Activated CD8-positive, alpha-beta memory T cell treated with anti-CD3 and anti-CD28 coated beads, Interleukin-2, amount 10 ng/mL, durations not matched to agents 7 days and 5 days (primary cell): ENCODE measurements at regions of chr15 and their contacts with region 1.

Region 1: GRCh38 chr15:89358755-89359439 is 24.3 kb upstream of the POLG start:
- DNase-seq: peak; percentile 86
- ATAC-seq: peak; percentile 93
- H3K4me3 Mint-ChIP-seq: peak overlapping the region; percentile 73
- H3K27ac Mint-ChIP-seq: peak overlapping the region; percentile 54
- H3K4me1 Mint-ChIP-seq: peaks cover 7% of the 10 kb centered on the region
- H3K27me3 Mint-ChIP-seq: peaks cover 83% of the 10 kb centered on the region

Region 2: GRCh38 chr15:89334510-89335288 is 24.2 kb before region 1 on chr15 and contains the start of gene POLG:
- CTCF ChIA-PET with region 1: interaction called, 120 read pairs
- DNase-seq: peak; percentile 99
- ATAC-seq: peak; percentile 93
- H3K4me3 Mint-ChIP-seq: peak within 1 kb of the TSS; percentile 83
- H3K27ac Mint-ChIP-seq: peak within 1 kb of the TSS; percentile 87
- H3K4me1 Mint-ChIP-seq: peaks cover 49% of the 10 kb centered on the region
- H3K27me3 Mint-ChIP-seq: peaks cover 10% of the 10 kb centered on the region
- total RNA-seq, gene POLG: 117 to 119 TPM

Region 3: GRCh38 chr15:89378296-89379151 is 19.6 kb after region 1 on chr15:
- CTCF ChIA-PET with region 1: interaction called, 85 read pairs
- DNase-seq: no peak
- ATAC-seq: peak; percentile 65
- H3K4me3 Mint-ChIP-seq: peak overlapping the region; percentile 59
- H3K27ac Mint-ChIP-seq: peak overlapping the region; percentile 80
- H3K4me1 Mint-ChIP-seq: peaks cover 4% of the 10 kb centered on the region
- H3K27me3 Mint-ChIP-seq: peaks cover 90% of the 10 kb centered on the region

Region 4: GRCh38 chr15:89416141-89416853 is 57.4 kb after region 1 on chr15:
- CTCF ChIA-PET with region 1: interaction called, 107 read pairs
- DNase-seq: peak; percentile 88
- ATAC-seq: peak; percentile 86
- H3K4me3 Mint-ChIP-seq: no peak overlapping the region
- H3K27ac Mint-ChIP-seq: no peak overlapping the region
- H3K4me1 Mint-ChIP-seq: peaks cover 11% of the 10 kb centered on the region
- H3K27me3 Mint-ChIP-seq: peaks cover 91% of the 10 kb centered on the region

Region 5: DNA sequence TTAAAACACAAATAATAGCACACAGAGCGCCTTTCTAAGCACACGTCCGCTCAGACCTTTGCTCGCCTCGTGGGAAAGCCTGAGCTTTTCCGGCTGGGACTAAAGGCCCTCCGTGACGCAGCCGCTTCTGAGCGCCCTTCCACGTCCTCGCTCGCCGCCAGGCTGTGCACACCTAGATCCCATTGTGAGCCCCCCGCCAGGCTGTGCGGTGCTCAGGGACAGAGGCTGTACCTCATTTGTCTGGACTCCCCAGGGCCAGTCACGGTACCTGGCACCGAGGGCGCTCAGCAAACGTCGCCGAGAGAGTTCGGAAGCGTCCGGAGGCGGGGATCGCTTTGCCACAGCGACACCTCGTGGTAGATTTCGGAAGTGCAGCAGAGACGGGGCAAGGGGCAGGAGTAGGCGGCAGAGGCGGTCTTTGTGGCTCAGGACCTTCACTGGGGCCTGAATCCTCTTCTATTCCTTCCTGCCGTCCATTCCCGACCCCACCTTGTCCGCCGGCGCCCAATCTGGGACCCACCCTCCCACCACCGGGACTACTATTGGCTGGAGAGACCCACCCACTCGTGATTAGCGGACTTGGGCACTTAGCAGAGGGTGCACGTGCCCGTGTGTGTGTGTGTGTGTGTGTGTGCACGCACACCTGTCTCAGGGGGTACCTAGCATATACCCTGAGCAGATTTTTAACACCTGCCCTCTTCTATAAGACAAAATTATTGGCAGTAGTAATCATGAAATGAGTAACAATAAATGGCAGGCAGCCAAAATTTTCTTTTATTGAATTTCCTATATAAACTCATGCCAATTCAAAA is 71.8 kb after region 1 on chr15:
- CTCF ChIA-PET with region 1: interaction called, 154 read pairs
- DNase-seq: peak; percentile 88
- ATAC-seq: peak; percentile 95
- H3K4me3 Mint-ChIP-seq: peak overlapping the region; percentile 68
- H3K27ac Mint-ChIP-seq: no peak overlapping the region
- H3K4me1 Mint-ChIP-seq: peaks cover 6% of the 10 kb centered on the region
- H3K27me3 Mint-ChIP-seq: peaks cover 32% of the 10 kb centered on the region

Region 6: GRCh38 chr15:89472785-89473256 is 113.9 kb after region 1 on chr15:
- CTCF ChIA-PET with region 1: interaction called, 35 read pairs
- DNase-seq: peak; percentile 65
- ATAC-seq: peak; percentile 65
- H3K4me3 Mint-ChIP-seq: no peak overlapping the region
- H3K27ac Mint-ChIP-seq: no peak overlapping the region
- H3K4me1 Mint-ChIP-seq: no peaks in the 10 kb centered on the region
- H3K27me3 Mint-ChIP-seq: peaks cover 32% of the 10 kb centered on the region